ENCODE measurements at regions of chr6 and their contacts with region 1.

Region 1: DNA sequence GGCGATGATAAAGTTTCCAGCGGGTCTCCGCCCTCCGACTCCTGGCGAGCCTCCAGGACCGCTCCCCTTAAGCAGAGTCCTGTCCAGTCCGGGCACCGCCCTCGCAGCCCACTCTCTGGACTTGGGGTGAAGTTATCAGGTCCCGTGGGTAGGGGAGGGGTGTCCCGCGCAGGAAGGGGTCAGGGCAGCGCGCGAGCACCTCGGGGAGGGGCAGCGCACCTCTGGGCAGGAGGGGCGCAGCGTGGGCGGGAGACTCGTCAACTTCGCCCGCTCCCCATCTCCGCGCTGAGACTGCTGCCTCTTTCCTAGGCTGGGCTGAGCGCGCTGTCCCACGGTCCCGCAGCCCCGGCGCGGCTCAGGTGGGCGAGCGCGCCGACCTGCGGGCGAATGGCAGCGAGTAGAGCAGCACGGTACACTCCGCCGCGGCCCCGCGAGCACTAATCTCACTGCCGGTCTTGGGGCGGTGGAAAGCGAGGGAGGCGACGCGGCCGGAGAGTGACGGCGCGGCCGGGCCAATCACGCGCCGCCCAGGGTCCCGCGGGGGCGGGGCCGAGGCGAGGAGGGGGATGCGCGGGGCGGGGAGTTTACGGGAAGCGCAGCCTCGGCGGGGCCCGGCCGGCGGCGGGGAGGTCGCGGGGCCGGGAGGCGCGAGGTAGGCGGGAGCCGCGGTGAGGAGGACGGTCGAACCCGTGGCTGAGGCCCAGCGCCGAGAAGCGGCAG is at the start of gene MAN1A1:
- DNase-seq: no peak
- ATAC-seq: peak; percentile 80
- H3K4me3 ChIP-seq: peak within 1 kb of the TSS; percentile 84
- H3K27ac ChIP-seq: peak within 1 kb of the TSS; percentile 84
- H3K4me1 ChIP-seq: peaks cover 3% of the 10 kb centered on the region
- H3K27me3 ChIP-seq: no peaks in the 10 kb centered on the region
- CTCF ChIP-seq: 0 out of 6 replicates have a peak, but pooled peaks of 1 of the 3 experiments have one; percentile 12
- EP300 ChIP-seq: no peak
- POLR2A ChIP-seq: peak; percentile 100
- RAD21 ChIP-seq: no peak
- polyA plus RNA-seq, gene MAN1A1: 8.7 TPM

Region 2: GRCh38 chr6:118893807-118894424 is 455.6 kb before region 1 on chr6 and contains the start of gene ASF1A:
- CTCF ChIA-PET with region 1: interaction called, 6 read pairs
- POLR2A ChIA-PET with region 1: no interaction called
- RAD21 ChIA-PET with region 1: no interaction called
- SMC1A ChIA-PET with region 1: interaction called, 3 read pairs
- in situ Hi-C with region 1: no loop called
- intact Hi-C with region 1: loop called (anchors 10 kb)
- DNase-seq: peak; percentile 87
- ATAC-seq: peak; percentile 76
- H3K4me3 ChIP-seq: peak within 1 kb of the TSS; percentile 79
- H3K27ac ChIP-seq: peak within 1 kb of the TSS; percentile 90
- H3K4me1 ChIP-seq: peaks cover 11% of the 10 kb centered on the region
- H3K27me3 ChIP-seq: no peaks in the 10 kb centered on the region
- CTCF ChIP-seq: peak; percentile 52 to 83 (median 57)
- EP300 ChIP-seq: no peak
- POLR2A ChIP-seq: peak; percentile 70
- RAD21 ChIP-seq: peak; percentile 63; the same call in 1 of the 2 replicates
- polyA plus RNA-seq, gene ASF1A: 25.3 to 26.0 TPM

Region 3: DNA sequence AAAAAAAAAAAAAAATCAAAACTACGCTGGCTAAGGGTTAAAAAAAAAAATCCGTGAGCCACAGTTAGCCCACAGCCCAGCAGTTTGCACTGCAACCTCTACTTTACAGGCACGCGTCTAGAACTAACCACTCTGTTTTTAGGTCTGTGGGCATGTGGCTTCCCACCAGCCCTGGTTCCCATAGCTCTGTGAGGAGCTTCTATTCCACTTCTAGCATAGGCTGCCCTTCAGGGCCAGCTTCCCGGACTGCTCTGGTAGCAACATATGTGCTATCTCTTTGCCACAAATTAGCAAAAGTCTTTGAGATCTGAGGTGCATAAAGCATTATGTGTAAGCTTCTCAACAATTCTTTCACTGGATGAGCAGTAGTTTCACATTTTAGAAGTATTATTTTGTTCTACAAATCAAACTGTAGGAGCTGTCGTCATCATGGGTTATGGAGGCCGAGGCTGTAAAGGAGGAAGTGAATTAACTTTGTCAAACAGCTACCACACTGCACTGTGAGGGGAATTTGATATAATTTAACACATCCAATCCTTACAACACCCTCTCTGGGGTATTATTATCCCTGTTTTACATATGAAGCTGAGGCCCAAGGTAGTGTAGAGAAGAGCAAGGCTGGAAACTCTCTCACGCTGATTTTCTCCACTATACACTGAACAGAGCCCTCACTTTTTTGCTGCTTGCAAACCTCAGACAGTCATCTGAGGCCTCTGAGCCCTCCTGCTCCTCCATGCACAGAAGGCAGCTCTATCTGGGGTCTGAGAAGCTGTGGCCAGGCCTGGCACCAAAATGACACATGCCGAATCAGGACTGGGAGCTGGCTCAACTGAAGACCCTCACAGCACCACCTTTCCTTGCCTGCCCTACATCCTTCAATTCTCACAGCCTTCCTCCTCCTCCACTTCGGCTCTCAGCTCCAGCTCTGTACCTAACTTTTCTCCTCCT is 35.3 kb before region 1 on chr6:
- CTCF ChIA-PET with region 1: interaction called, 58 read pairs
- POLR2A ChIA-PET with region 1: interaction called, 75 read pairs
- RAD21 ChIA-PET with region 1: interaction called, 414 read pairs
- SMC1A ChIA-PET with region 1: interaction called, 359 read pairs
- in situ Hi-C with region 1: no loop called
- intact Hi-C with region 1: no loop called
- DNase-seq: peak; percentile 42
- ATAC-seq: peak; percentile 78
- H3K4me3 ChIP-seq: no peak overlapping the region; the same call in 1 of the 2 replicates
- H3K27ac ChIP-seq: peak overlapping the region; percentile 73
- H3K4me1 ChIP-seq: peaks cover 28% of the 10 kb centered on the region
- H3K27me3 ChIP-seq: no peaks in the 10 kb centered on the region
- CTCF ChIP-seq: no peak
- EP300 ChIP-seq: peak in 1 of 2 experiments; percentile 86; a peak in 1 of 4 replicates
- POLR2A ChIP-seq: peak; percentile 46; the same call in 1 of the 2 replicates
- RAD21 ChIP-seq: no peak

Region 4: GRCh38 chr6:119333707-119334295 is 15.7 kb before region 1 on chr6:
- CTCF ChIA-PET with region 1: interaction called, 144 read pairs
- POLR2A ChIA-PET with region 1: interaction called, 52 read pairs
- RAD21 ChIA-PET with region 1: interaction called, 148 read pairs
- SMC1A ChIA-PET with region 1: interaction called, 168 read pairs
- in situ Hi-C with region 1: no loop called
- intact Hi-C with region 1: no loop called
- DNase-seq: no peak
- ATAC-seq: peak; percentile 61
- H3K4me3 ChIP-seq: no peak overlapping the region
- H3K27ac ChIP-seq: no peak overlapping the region
- H3K4me1 ChIP-seq: no peaks in the 10 kb centered on the region
- H3K27me3 ChIP-seq: no peaks in the 10 kb centered on the region
- CTCF ChIP-seq: peak; percentile 45 to 69 (median 57); a peak in 5 of 6 replicates
- EP300 ChIP-seq: no peak
- POLR2A ChIP-seq: no peak
- RAD21 ChIP-seq: peak; percentile 88

Region 5: DNA sequence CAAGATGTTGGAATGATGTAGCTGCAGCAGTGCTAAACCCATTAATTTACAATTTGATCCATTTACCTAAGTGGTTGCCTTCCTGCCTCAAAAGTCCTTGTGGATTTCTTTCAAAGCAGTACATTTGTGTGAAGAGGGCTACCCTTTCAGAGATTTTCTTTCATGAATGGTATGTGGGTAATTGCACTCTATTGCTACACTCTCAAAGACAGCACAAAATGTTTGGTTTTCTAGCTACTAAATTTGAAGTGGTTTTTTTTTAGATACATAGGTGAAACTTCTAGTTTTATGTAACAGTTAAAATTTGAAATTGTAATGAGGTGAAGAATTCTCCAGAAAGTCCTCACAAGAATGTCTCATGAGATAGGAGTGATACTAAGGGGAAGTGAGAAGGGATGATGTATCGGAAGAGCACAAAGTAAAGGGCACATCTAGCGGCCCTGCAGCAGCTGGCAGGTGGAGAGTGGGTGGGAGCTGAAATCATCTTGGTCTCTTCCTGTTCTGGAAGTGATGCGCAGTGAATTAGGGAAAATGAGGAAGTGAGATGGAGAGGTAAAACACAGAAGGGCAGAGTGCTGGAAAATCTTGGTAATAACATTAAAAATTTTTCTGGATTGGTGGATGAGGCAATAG is 236.9 kb after region 1 on chr6:
- CTCF ChIA-PET with region 1: interaction called, 4 read pairs
- POLR2A ChIA-PET with region 1: no interaction called
- RAD21 ChIA-PET with region 1: interaction called, 11 read pairs
- SMC1A ChIA-PET with region 1: interaction called, 7 read pairs
- in situ Hi-C with region 1: no loop called
- intact Hi-C with region 1: no loop called
- DNase-seq: peak; percentile 19
- ATAC-seq: peak; percentile 91
- H3K4me3 ChIP-seq: no peak overlapping the region
- H3K27ac ChIP-seq: no peak overlapping the region
- H3K4me1 ChIP-seq: peaks cover 13% of the 10 kb centered on the region
- H3K27me3 ChIP-seq: no peaks in the 10 kb centered on the region
- CTCF ChIP-seq: 0 out of 6 replicates have a peak, but pooled peaks of 1 of the 3 experiments have one; percentile 5
- EP300 ChIP-seq: 0 out of 4 replicates have a peak, but pooled peaks of 1 of the 2 experiments have one; percentile 19
- POLR2A ChIP-seq: no peak
- RAD21 ChIP-seq: peak; percentile 46; the same call in 1 of the 2 replicates

Region 6: DNA sequence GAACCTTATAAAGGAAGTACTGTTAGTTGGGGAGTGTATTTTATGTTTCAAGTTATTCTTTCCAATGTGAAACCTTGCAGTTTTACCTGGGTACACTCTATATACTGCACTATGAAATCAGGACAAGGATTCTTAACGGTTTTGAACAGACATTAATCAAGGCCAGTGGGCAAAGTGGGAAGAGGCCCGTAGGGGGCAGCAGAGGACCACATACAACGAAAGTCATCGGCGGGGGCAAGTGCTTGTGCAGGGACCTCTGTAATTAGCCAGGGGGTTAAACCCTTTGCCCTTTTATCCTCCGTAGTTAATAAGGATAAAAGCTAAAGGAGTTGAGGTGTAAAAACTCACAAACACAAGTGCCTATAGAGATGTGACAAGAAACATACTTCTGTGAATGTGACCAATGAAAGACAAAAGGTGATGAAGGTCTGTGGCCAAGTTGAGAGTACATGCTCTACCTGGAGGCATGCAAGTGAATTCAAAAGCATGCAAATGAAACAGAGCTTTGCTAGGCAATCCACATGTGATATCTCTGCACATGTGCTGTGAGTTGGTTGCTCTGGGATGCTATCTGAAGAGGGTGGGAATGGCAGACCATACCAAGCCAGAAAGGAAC is 392.8 kb after region 1 on chr6:
- CTCF ChIA-PET with region 1: interaction called, 17 read pairs
- POLR2A ChIA-PET with region 1: no interaction called
- RAD21 ChIA-PET with region 1: interaction called, 21 read pairs
- SMC1A ChIA-PET with region 1: interaction called, 22 read pairs
- in situ Hi-C with region 1: no loop called
- intact Hi-C with region 1: loop called (anchors 1 kb)
- DNase-seq: no peak
- ATAC-seq: peak; percentile 98
- H3K4me3 ChIP-seq: no peak overlapping the region
- H3K27ac ChIP-seq: no peak overlapping the region
- H3K4me1 ChIP-seq: no peaks in the 10 kb centered on the region
- H3K27me3 ChIP-seq: no peaks in the 10 kb centered on the region; a peak in 1 of 4 replicates
- CTCF ChIP-seq: peak; percentile 82 to 85 (median 84)
- EP300 ChIP-seq: no peak
- POLR2A ChIP-seq: no peak
- RAD21 ChIP-seq: peak; percentile 93

Measured in GM12878 (cell line).